ENCODE measurements at regions of chr17 and their contacts with region 1.

Region 1: GRCh38 chr17:45385331-45385997 is 47.2 kb downstream of the ARHGAP27 start:
- DNase-seq: peak; percentile 92
- ATAC-seq: peak; percentile 86
- H3K4me3 Mint-ChIP-seq: no peak overlapping the region
- H3K27ac Mint-ChIP-seq: peak overlapping the region; percentile 74
- H3K4me1 Mint-ChIP-seq: peaks cover 27% of the 10 kb centered on the region
- H3K27me3 Mint-ChIP-seq: peaks cover 11% of the 10 kb centered on the region
- CTCF ChIP-seq: peak; percentile 97

Region 2: DNA sequence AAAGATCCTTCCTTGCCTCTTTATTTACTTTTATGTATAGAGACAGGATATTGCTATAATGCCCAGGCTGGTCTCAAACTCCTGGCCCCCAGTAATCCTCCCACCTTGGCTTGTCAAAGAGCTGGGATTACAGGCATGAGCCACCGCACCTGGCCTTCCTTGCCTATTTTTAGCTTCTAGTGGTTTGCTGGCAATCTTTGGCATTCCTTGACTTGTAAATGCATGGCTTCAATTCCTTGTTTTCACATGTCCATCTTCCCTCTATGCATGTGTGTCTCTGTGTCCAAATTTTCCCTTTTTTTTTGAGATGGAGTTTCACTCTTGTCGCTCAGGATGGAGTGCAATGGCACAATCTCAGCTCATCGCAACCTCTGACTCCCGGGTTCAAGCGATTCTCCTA is 201.3 kb before region 1 on chr17:
- CTCF ChIA-PET with region 1: no interaction called
- POLR2A ChIA-PET with region 1: no interaction called
- intact Hi-C with region 1: no loop called
- DNase-seq: no peak
- ATAC-seq: no peak
- H3K4me3 Mint-ChIP-seq: no peak overlapping the region
- H3K27ac Mint-ChIP-seq: no peak overlapping the region
- H3K4me1 Mint-ChIP-seq: no peaks in the 10 kb centered on the region
- H3K27me3 Mint-ChIP-seq: no peaks in the 10 kb centered on the region
- CTCF ChIP-seq: no peak

Region 3: DNA sequence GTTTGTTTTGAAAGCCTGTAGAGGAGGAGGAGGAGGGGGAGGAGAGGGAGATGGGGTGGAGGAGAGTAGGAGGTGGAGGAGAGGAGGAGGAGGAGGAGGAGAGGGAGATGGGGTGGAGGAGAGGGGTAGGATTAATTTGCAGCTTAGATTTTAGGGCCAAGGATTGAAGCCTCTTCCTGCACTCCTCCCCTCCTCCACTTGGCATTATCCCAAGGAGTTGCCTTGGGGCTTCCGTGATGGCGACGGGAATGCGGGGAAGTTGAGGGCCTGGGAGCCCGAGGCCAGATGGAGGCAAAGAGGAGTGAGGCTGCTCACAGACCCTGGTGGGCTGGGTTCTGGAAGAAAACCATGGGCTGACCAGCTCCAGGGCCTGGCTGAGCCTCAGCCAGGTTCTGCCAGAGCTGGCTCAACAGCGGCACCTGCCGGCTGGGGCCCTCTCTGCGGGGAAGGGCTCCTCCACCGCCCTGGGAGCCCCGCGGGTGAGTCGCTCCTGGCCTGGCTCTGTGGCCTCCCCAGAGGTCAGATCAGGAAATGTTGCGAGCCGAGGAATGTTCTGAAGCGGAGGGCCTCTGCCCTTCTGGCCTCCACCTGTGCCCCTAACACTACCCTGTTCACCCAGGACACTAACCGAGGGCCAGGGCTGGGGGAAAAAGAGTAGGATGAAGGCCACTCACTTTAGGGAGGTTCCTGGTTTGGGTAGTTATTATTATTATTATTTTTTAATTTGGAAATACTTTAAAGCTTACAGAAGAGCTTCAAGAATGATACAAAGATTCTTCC is 187.7 kb before region 1 on chr17:
- CTCF ChIA-PET with region 1: interaction called, 11 read pairs
- POLR2A ChIA-PET with region 1: no interaction called
- intact Hi-C with region 1: no loop called
- DNase-seq: peak; percentile 91
- ATAC-seq: peak; percentile 100
- H3K4me3 Mint-ChIP-seq: no peak overlapping the region
- H3K27ac Mint-ChIP-seq: no peak overlapping the region
- H3K4me1 Mint-ChIP-seq: peaks cover 5% of the 10 kb centered on the region
- H3K27me3 Mint-ChIP-seq: no peaks in the 10 kb centered on the region
- CTCF ChIP-seq: peak; percentile 99

Region 4: DNA sequence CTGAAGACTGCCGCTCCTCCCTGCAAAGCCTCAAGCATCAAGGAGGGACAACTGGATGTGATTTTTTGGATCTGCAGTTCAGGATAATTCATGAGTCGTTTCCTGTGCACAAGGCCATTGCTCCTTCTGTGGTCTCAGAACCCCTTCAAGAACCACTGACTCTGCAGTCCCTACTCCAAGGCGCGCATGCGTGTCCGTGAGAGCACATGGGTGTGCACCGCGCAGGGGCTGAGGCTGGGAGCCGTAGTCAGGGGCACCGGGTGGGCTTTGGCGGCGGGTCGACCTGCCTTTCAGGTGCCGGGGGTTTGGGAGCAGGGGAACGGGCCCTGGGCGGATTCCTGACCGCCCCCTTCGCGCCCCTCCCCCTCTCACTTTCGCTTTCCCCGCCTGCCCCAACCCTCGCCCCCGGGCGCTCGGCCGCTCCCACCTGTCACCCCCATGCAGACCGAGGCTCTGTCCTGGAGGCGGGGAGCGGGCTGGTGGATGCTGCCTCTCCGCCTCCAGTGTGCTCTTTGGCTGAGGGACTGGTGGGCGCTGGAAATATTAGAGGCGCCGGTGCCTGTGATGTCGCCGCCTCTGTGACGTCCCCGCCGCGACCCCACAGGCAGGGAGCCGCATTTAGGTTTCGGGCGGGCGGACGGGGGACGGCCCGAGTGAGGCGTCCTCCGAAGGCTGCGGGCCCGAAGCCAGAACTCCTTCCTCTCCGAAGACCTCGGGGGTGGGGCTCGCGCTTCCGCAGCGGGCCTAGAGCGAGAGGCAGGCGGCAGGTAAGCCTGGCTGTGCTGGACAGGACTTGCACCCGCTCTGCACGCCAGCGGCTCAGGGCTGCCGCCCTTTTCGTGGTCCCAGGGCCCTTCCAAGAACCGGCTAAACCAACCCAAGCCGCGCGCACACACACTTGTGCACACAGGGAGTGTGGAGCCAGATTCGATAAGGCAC is 123.6 kb before region 1 on chr17 and contains the start of gene SPATA32:
- CTCF ChIA-PET with region 1: interaction called, 10 read pairs
- POLR2A ChIA-PET with region 1: interaction called, 3 read pairs
- intact Hi-C with region 1: no loop called
- DNase-seq: peak; percentile 91
- ATAC-seq: peak; percentile 94
- H3K4me3 Mint-ChIP-seq: peak within 1 kb of the TSS; percentile 76
- H3K27ac Mint-ChIP-seq: peak within 1 kb of the TSS; percentile 85
- H3K4me1 Mint-ChIP-seq: peaks cover 34% of the 10 kb centered on the region
- H3K27me3 Mint-ChIP-seq: no peaks in the 10 kb centered on the region
- CTCF ChIP-seq: no peak
- total RNA-seq, gene SPATA32: 0.27 to 0.63 TPM

Region 5: DNA sequence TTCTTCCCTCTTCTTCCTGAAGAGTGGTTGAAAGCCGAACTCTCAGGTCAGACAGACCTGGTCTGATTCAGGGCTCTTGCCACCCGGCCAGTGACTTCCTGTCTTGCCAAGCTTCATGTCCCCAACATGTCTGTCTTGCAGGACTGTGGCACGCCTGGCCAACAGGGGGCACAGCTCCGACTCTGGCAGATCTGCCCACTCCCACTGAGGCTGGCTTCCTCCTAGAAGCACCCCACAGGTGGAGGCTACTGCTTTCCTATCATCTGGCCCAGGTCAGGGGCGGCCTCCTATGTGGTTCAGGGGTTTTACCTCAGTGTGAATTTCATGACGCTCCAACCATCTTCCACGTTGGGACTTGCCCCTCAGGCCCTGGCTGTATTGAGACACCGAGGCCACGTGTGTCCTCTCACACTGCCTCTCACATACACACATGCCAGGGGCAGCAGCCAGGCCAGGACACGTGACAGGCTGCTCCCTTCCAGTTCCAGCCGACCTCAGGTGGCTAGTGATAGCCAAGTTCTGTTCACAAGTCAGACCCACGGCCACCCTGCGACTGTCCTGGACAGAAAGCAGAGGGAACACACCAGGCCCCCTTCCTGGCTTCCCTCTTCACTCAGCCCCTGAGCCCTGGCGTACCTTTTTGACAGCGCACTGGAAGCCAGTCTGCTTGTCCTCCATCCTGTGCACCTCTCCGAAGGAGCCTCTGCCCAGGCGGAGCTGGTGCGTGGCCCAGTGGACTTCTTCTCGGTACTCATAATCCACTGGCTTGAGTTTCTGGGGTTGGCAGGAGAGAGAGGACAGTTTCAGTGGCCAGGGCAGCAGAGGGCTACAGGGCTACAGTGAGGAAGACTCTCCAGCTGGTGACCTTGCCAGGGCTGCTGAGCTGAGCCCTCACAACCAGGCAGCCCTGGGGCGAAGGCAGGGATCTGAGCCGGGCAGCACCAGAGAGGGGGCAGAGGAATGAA is 101.0 kb before region 1 on chr17:
- CTCF ChIA-PET with region 1: interaction called, 270 read pairs
- POLR2A ChIA-PET with region 1: interaction called, 3 read pairs
- intact Hi-C with region 1: no loop called
- DNase-seq: peak; percentile 65
- ATAC-seq: peak; percentile 60
- H3K4me3 Mint-ChIP-seq: no peak overlapping the region
- H3K27ac Mint-ChIP-seq: peak overlapping the region; percentile 86
- H3K4me1 Mint-ChIP-seq: peaks cover 25% of the 10 kb centered on the region
- H3K27me3 Mint-ChIP-seq: no peaks in the 10 kb centered on the region
- CTCF ChIP-seq: no peak

Region 6: DNA sequence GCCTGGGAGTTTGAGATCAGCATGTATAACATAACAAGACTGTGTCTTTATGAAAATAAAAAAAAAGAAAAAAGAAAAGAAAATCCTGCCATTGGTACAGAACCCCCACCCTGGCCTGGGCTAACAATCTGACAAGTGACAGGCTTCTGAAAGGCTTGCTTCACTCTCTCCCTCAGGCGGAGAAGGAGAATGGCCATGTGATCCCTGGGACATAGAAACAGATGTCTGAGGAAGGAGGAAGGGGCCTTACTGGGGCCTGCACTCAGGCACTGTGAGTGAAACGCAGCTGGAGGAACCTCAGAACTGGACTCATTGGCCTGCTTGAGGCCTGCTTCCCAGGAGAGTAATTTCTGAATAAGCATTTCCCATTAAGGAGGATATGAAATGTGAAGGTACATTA is 86.1 kb before region 1 on chr17:
- CTCF ChIA-PET with region 1: interaction called, 22 read pairs
- POLR2A ChIA-PET with region 1: interaction called, 3 read pairs
- intact Hi-C with region 1: no loop called
- DNase-seq: no peak
- ATAC-seq: no peak
- H3K4me3 Mint-ChIP-seq: no peak overlapping the region
- H3K27ac Mint-ChIP-seq: peak overlapping the region; percentile 56
- H3K4me1 Mint-ChIP-seq: peaks cover 80% of the 10 kb centered on the region
- H3K27me3 Mint-ChIP-seq: no peaks in the 10 kb centered on the region
- CTCF ChIP-seq: no peak

Region 7: DNA sequence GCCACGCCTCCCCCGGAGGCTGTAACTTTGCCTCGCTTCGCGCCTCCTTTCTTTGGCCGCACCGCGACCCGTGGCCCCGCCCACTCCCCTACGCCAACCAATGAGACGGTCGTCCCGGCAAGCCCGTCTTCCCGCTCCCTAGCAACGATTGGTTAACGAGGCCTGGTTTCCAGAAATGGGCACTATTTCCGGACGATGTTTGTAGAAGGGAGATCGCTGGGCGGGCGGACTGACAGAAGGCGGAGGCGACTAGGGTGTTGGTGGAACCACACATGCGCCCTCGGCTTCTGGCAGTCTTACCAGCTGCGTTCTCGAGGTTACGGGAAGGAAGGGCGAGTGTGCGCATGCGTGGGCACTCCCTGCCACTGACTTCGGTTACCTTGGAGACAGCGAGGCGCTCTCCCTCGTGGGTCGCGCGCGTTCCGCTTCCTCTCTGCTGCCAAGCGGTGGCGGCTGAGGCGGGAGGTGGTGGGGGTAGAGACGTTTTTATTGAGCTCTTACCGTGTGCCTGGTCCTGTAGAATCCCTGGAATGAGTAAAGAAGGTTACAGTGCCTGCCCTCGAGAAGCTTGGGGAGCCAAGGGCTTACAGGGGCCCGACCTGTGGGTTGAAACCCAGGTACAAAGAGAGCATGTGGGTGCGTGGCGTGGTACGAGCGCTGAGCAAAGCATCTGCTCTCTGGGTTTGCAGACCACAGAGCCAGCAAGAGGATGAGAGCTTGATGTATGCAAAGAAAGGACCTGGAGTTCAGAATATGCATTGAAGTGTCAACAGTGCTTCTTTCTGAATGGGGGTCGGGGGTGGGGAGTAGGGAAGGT is 68.1 kb before region 1 on chr17:
- CTCF ChIA-PET with region 1: interaction called, 20 read pairs
- POLR2A ChIA-PET with region 1: interaction called, 14 read pairs
- intact Hi-C with region 1: loop called (anchors 5 kb)
- DNase-seq: peak; percentile 100
- ATAC-seq: peak; percentile 81
- H3K4me3 Mint-ChIP-seq: peak overlapping the region; percentile 81
- H3K27ac Mint-ChIP-seq: peak overlapping the region; percentile 88
- H3K4me1 Mint-ChIP-seq: peaks cover 60% of the 10 kb centered on the region
- H3K27me3 Mint-ChIP-seq: no peaks in the 10 kb centered on the region
- CTCF ChIP-seq: no peak

Region 8: DNA sequence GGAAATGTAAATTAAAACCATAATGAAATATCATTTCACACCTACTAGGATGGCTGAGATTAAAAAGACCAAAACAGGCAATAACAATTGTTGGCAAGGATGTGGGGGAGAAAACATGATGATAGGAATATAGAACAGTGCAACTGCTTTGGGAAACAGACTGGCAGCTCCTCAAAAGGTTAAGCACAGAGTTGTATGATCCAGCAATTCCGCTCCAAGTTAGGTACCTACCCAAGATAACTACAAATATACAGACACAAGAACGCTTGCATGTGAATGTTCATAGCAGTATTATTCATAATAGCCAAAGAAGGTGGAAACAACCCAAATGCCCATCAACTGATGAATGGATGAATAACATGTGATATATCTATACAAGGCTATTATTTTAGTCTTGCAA is 33.6 kb before region 1 on chr17:
- CTCF ChIA-PET with region 1: no interaction called
- POLR2A ChIA-PET with region 1: no interaction called
- intact Hi-C with region 1: no loop called
- DNase-seq: no peak
- ATAC-seq: no peak
- H3K4me3 Mint-ChIP-seq: no peak overlapping the region
- H3K27ac Mint-ChIP-seq: no peak overlapping the region
- H3K4me1 Mint-ChIP-seq: peaks cover 29% of the 10 kb centered on the region
- H3K27me3 Mint-ChIP-seq: peaks cover 5% of the 10 kb centered on the region
- CTCF ChIP-seq: no peak

Region 9: DNA sequence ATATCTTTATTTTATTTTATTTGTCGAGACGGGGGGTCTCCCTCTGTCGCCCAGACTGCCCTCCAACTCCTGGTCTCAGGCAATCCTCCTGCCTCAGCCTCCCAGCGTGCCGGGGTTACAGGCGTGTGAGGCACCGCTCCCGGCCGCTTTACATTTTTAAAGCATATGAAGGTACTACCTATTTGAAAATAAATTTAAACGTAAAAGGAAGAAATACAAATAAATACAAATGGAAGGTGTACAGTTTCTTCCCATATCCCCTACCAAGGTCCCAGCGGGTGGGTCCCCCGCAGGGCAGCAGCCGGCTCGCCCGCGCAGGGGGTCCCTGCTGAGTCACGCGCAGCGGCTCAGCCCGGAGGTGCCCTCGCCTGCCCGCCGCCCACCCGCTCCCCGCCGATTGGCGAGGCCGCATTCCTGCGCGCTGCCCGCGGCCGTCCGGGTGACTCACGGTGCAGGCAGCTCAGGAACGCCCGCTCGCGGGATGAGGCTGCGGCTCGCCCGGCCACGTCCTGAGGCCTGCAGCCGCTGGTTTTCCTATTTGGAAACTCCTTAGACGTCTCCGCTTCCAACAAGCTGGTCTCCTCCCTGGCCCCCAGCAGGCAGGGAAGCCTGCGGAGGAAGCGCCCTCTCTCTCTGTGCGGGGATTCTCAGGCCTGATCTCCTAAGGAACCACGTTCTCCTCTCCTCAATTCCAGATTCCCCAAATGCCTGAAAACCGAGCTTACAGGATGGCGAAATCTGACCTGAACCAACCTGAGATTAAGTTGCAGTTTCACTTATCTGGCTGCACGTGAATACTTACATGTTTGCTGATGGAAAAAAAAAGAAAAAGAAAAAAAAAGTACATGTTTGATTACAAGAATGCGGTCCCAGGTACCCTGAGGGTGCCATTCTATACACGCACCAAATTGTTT is 13.8 kb before region 1 on chr17:
- CTCF ChIA-PET with region 1: interaction called, 25 read pairs
- POLR2A ChIA-PET with region 1: interaction called, 4 read pairs
- intact Hi-C with region 1: no loop called
- DNase-seq: peak; percentile 70
- ATAC-seq: peak; percentile 91
- H3K4me3 Mint-ChIP-seq: peak overlapping the region; percentile 21
- H3K27ac Mint-ChIP-seq: no peak overlapping the region
- H3K4me1 Mint-ChIP-seq: peaks cover 16% of the 10 kb centered on the region
- H3K27me3 Mint-ChIP-seq: peaks cover 2% of the 10 kb centered on the region
- CTCF ChIP-seq: no peak

Region 10: GRCh38 chr17:45628019-45628418 is 242.6 kb after region 1 on chr17:
- CTCF ChIA-PET with region 1: no interaction called
- POLR2A ChIA-PET with region 1: no interaction called
- intact Hi-C with region 1: no loop called
- DNase-seq: no peak
- ATAC-seq: no peak
- H3K4me3 Mint-ChIP-seq: no peak overlapping the region
- H3K27ac Mint-ChIP-seq: no peak overlapping the region
- H3K4me1 Mint-ChIP-seq: peaks cover 4% of the 10 kb centered on the region
- H3K27me3 Mint-ChIP-seq: no peaks in the 10 kb centered on the region
- CTCF ChIP-seq: no peak